Activated naive CD4-positive, alpha-beta T cell treated with anti-CD3 and anti-CD28 coated beads for 36 hours (primary cell): ENCODE measurements at regions of chr14 and their contacts with region 1.

Region 1: DNA sequence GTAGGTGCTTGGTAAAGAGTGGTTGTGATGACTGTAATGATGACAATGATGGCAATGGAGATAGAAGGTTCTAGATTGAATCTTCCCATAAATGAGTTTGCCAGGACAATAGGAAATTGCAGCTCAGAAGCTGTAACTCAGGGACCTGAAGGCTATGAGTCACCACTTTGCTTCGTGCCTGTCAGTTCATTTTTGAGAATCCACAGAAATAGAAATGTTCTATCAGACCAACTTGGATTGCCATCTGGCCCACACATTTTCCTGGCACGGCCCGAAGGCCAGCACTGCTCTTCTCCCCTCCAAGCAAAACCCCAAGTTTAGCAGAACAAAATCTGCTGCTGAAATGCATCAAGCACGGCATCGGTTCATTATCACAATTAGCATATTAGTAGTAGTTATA is 1127.0 kb downstream of the BCL11B start:
- DNase-seq: no peak
- H3K4me3 Mint-ChIP-seq: no peak overlapping the region
- H3K27ac Mint-ChIP-seq: peak overlapping the region; percentile 77
- H3K4me1 Mint-ChIP-seq: peaks cover 64% of the 10 kb centered on the region
- H3K27me3 Mint-ChIP-seq: no peaks in the 10 kb centered on the region

Region 2: DNA sequence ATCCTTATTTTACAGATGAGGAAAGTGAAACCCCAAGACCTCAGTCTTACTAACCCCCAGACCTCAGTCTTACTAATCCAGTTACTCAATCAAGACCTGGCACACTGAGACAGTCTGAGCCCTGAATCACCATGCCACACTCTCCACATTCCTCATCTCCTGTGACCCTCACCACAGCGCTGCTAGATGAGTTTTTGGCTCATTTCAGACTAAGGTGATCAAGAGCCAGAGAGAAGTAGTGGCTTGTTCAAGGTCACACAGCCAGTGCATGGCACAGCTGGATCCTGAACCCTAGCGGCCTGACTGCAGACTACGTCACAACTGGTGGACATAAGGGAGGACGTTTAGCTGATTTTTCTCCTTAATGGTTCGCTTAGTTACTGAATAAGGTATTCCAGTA is 547.9 kb after region 1 on chr14:
- CTCF ChIA-PET with region 1: no interaction called
- intact Hi-C with region 1: loop called (anchors 10 kb)
- DNase-seq: peak; percentile 31
- H3K4me3 Mint-ChIP-seq: no peak overlapping the region
- H3K27ac Mint-ChIP-seq: no peak overlapping the region
- H3K4me1 Mint-ChIP-seq: peaks cover 8% of the 10 kb centered on the region
- H3K27me3 Mint-ChIP-seq: no peaks in the 10 kb centered on the region

Region 3: GRCh38 chr14:98931911-98932310 is 786.9 kb after region 1 on chr14:
- CTCF ChIA-PET with region 1: no interaction called
- intact Hi-C with region 1: loop called (anchors 10 kb)
- DNase-seq: peak; percentile 86
- H3K4me3 Mint-ChIP-seq: peak overlapping the region; percentile 44
- H3K27ac Mint-ChIP-seq: peak overlapping the region; percentile 71
- H3K4me1 Mint-ChIP-seq: peaks cover 81% of the 10 kb centered on the region
- H3K27me3 Mint-ChIP-seq: no peaks in the 10 kb centered on the region